ENCODE measurements at regions of chr4 and their contacts with region 1.

Region 1: DNA sequence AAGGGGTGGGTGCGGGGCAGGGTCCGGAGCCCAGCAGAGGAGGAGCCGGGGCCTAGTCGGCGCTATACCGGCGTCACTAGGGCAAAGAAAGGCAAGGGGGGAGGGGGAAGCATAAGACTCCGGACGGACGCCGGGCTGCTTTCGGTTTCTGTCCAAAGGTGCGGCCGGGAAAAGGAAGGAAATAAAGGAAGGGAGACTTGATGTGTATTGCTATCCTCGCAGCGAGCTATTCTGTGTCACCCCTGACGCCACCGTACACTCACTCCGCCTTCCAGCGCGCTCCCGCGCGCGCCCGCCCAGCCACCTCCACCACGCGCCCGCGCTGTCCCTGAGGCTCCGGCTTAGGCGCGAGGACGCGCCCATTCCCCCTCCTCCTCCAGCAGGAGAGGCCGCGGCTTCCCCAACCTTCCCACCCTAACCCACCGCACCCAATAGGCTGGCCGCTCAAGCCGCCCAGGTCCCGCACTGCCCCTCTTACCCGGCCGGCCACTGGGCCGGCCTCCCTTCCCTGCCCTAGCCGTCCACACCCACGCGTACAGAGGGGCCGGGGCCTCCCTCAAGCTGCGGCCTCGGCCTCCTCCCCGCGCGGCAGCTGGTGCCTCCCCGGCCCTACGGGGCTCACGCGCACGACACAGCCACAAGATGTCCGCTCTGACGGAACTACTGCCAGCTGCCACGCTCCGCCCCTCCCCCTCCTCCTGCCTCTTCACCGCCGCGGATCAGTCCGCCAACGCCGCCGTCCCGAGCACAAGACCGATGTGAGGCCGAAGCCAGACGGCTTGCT is at the start of gene UBE2D3:
- DNase-seq: peak; percentile 55

Region 2: DNA sequence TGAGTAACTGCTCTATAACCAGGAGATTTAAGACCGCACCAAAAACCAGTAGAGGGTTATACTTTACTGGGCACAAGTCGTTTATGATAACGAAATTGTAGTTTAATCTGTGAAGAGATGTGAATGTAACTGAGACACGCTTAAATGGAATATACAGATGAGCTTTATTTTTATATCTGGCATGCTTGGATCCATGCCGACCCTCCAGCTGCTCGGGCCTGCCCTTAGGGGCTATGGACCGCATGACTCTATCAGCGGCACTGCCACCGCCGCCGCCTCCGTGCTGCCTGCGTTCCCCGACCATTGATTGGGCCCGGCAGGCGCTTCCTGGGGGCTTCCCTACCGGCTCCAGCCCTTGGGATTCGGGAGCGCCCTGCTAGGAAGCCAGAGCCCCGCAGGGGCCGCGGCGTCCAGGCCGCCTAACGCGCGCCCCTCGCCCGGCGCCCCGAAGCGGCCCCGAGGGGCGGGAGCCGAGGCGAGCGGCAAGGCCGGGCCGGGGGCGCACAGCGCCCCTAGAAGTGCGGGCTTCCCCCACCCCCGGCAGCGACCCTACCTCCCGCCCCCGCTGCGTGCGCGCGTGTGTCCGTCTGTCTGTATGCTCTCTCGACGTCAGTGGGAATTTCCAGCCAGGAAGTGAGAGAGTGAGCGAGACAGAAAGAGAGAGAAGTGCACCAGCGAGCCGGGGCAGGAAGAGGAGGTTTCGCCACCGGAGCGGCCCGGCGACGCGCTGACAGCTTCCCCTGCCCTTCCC is 326.2 kb before region 1 on chr4 and contains the start of gene NFKB1:
- CTCF ChIA-PET with region 1: no interaction called
- POLR2A ChIA-PET with region 1: interaction called, 10 read pairs
- DNase-seq: peak; percentile 33

Region 3: GRCh38 chr4:102533904-102534303 is 293.2 kb before region 1 on chr4:
- CTCF ChIA-PET with region 1: no interaction called
- POLR2A ChIA-PET with region 1: no interaction called
- DNase-seq: no peak

Region 4: DNA sequence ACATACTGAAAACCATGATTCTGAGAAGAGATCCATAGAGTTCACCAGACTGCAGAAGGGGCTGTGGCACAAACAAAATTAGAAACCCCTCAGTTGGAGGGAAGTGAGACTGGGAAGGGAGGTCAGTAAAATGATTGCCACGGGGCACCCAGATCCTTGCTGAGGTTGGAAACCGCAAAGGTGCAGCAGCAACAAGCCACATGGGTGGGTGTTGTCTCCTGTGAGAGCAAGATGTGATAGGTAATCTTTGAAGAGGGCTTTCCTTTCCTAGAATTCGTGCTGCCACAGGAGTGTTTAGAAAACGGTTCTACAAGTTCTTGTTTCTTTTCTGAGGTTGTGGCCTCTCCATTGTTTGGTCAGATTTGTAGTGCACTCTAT is 240.4 kb before region 1 on chr4:
- CTCF ChIA-PET with region 1: no interaction called
- POLR2A ChIA-PET with region 1: no interaction called
- DNase-seq: no peak

Region 5: GRCh38 chr4:102760645-102761295 is 66.3 kb before region 1 on chr4 and contains the start of gene MANBA:
- CTCF ChIA-PET with region 1: no interaction called
- POLR2A ChIA-PET with region 1: interaction called, 19 read pairs
- DNase-seq: peak; percentile 90

Region 6: GRCh38 chr4:102780476-102781144 is 46.5 kb before region 1 on chr4:
- CTCF ChIA-PET with region 1: no interaction called
- POLR2A ChIA-PET with region 1: interaction called, 19 read pairs
- DNase-seq: peak; percentile 14

Region 7: GRCh38 chr4:102815981-102816380 is 11.1 kb before region 1 on chr4:
- CTCF ChIA-PET with region 1: no interaction called
- POLR2A ChIA-PET with region 1: interaction called, 32 read pairs
- DNase-seq: no peak

Region 8: DNA sequence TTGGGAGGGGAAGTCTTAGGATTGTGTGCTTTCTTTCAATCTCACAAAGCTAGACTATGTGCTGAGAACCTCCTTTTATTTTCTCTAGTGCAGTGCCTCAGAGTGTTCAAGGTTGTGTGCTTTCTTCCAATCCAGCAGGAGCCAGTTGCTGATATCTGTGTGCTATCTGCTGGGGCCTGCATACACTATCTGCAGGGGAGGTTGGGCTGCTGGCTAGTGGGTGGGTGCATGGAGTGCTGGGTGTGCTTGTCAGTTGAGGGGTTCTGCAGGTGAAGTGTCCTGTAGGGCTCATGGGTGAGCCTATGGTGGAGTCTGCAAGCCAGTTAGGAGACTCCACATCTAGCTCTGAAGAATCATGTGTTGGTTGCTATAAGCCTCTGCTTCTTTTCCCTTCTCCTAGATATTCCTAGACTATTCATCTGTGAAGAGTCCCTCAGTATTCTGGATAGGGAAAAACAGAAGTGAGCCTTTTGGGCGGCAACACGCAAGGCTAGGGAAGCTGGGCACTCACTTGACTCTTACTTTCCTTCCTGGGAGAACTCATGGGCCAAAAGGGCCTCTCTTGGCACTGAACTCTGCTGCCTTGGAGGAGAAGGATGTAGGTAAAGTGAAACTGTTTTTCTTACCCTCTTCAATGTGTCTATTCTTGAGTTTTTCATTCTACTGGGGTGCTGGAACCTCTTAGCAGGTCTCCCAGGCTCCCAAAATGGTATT is 33.7 kb after region 1 on chr4:
- CTCF ChIA-PET with region 1: no interaction called
- POLR2A ChIA-PET with region 1: interaction called, 10 read pairs
- DNase-seq: no peak

Region 9: DNA sequence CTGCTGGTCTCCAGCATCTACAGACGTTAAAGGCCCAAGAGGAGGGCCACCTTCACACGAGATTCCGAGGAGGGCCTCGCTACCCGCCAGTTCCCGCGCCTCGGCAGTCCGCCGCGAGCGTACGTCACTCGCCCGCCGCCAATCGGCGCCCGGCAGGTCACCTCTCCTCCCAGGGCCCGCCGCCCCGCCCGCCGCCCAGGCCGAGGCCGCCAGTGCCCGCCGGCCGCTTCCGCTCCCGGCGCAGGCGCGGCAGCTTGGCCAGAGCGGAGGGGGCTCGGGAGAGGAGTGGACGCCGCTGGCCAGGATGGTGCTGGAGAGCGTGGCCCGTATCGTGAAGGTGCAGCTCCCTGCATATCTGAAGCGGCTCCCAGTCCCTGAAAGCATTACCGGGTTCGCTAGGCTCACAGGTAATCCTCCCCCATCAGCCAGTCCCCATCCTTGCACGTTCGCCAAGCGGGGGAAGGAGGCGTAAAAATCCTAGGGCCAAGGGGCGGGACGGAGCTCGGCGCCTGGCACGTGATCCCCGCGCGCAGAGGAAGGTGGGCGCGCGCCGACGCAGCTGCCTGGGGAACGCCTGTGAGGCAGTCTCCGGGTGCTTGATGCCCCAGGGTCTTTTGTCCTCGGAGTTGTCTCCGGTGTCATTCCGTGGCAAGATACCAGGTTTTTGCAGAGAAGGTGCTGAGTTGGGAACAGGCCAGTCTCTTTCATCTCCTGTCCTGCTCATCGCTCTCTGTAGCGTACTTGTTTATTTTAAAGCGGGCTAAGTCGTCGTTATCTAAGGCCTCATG is 41.9 kb after region 1 on chr4 and contains the start of gene CISD2:
- CTCF ChIA-PET with region 1: no interaction called
- POLR2A ChIA-PET with region 1: interaction called, 75 read pairs
- DNase-seq: peak; percentile 86